ENCODE measurements at regions of chr21 and their contacts with region 1.

Region 1: GRCh38 chr21:33894736-33895288 is 20.8 kb downstream of the ATP5PO start:
- DNase-seq: peak; percentile 84 to 86
- H3K4me3 ChIP-seq: no peak overlapping the region
- H3K27ac ChIP-seq: no peak overlapping the region
- H3K4me1 ChIP-seq: peaks cover 3% of the 10 kb centered on the region in 2 donors
- H3K27me3 ChIP-seq: no peaks in the 10 kb centered on the region
- CTCF ChIP-seq: peak; percentile 43 to 89 (median 78)
- POLR2A ChIP-seq: no peak

Region 2: DNA sequence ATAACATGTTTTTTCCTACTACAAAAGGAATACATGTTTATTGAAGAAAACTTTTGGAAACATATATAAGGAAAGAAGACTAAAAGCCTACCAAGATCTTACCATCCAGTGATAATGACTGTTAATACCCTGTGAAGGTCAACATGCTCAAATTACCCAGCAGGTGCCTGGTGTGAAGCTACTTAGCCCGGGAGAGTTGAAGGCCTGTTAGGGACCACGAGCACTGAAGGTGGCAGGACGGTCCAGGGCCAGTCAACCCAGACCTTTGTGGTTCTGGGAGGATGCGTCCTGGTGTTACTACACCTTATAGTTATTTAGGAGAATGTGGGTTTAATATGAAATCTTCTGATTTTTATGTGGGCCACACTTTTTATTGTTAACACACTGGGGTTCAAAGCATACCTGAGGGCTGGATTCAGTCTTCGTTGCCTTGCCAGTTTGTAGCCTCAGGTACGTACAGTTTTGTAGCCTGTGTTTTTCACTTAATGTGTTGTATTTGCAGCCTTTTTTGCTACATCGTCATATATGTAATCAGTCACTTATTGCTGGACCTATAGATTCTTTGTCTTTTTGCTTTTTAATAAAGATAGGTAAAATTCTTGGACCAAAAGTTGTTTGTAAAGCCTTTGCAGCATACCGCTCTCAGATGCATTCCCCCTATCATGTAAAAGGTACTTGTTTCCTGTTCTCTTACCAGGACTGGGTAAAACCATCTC is 242.7 kb before region 1 on chr21:
- intact Hi-C with region 1: loop called (anchors 5 kb)
- DNase-seq: no peak
- H3K4me3 ChIP-seq: no peak overlapping the region
- H3K27ac ChIP-seq: no peak overlapping the region
- H3K4me1 ChIP-seq: peaks cover 18 to 30% of the 10 kb centered on the region in 2 donors
- H3K27me3 ChIP-seq: no peaks in the 10 kb centered on the region
- CTCF ChIP-seq: no peak
- POLR2A ChIP-seq: no peak